Activated naive CD4-positive, alpha-beta T cell treated with anti-CD3 and anti-CD28 coated beads, Interleukin-2, amount 10 ng/mL, durations not matched to agents 7 days and 5 days (primary cell): ENCODE measurements at regions of chr12 and their contacts with region 1.

Region 1: DNA sequence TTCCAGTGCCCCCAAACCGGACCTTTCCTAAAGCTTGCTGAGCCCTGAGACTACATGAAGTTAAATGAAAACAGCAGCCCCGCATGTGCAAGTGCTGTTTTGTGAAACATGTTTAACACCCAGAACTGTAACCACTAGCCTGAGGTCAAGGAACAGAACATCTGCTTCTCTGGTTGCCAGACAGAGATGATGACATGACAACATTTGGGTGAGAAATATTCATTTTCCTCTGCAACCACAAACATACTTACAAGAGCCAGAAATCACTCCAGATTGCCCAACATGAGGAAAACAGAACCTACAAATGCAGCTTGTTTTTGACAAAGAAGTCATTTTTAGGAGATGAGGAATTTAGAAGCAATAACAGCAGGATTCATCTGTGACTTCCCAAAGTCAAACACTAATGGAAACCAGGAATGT is 110.4 kb downstream of the BCAT1 start:
- DNase-seq: no peak
- H3K4me3 Mint-ChIP-seq: no peak overlapping the region
- H3K27ac Mint-ChIP-seq: no peak overlapping the region
- H3K4me1 Mint-ChIP-seq: peaks cover 25% of the 10 kb centered on the region
- H3K27me3 Mint-ChIP-seq: no peaks in the 10 kb centered on the region

Region 2: GRCh38 chr12:24852420-24852819 is 13.9 kb after region 1 on chr12:
- CTCF ChIA-PET with region 1: interaction called, 17 read pairs
- DNase-seq: no peak
- H3K4me3 Mint-ChIP-seq: no peak overlapping the region
- H3K27ac Mint-ChIP-seq: no peak overlapping the region
- H3K4me1 Mint-ChIP-seq: no peaks in the 10 kb centered on the region
- H3K27me3 Mint-ChIP-seq: no peaks in the 10 kb centered on the region